Left cardiac atrium (tissue), 4 donors: ENCODE measurements at regions of chr9 and their contacts with region 1.

Region 1: DNA sequence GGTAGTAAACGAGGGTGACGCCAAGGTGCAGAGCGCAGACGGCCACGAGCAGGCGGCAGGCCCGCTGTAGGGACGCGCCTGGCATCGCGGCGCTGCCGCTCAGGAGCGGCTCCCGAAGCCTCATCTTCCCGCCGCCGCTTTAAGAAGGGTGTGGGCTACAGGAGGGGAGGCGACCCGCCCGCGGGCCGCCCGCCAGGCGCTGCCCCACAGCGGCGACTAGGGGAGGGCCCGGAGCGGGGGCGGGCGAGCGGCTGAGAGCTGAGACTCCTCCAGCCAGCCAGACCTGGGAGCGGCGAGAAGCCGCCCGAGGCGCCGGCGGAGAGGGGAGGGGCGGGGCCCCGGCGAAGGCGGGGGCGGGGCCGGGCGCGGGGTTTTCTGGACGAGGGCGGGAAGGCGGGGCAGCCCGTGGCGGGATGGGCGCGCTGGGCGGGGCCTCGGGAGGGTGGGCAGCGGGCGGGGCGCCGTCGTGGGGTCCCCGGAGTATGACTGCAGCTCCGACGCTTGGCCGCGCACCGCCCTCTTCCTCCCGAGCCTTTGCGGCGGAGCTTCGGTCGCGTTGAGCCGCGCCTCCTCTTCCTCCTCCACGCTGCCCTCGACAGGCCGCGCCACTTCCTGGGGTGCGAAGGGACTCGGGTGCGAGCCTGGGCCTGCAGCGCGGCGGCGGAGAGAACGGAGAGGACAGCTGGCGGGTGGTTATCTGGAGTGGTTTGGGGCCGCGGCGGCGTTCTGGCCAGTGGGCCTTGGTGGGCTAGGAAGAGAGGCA is at the start of gene B4GALT1:
- DNase-seq: peak; percentile 97
- ATAC-seq: peak; percentile 85 to 87
- total RNA-seq, gene B4GALT1: 49.5 to 107 TPM

Region 2: DNA sequence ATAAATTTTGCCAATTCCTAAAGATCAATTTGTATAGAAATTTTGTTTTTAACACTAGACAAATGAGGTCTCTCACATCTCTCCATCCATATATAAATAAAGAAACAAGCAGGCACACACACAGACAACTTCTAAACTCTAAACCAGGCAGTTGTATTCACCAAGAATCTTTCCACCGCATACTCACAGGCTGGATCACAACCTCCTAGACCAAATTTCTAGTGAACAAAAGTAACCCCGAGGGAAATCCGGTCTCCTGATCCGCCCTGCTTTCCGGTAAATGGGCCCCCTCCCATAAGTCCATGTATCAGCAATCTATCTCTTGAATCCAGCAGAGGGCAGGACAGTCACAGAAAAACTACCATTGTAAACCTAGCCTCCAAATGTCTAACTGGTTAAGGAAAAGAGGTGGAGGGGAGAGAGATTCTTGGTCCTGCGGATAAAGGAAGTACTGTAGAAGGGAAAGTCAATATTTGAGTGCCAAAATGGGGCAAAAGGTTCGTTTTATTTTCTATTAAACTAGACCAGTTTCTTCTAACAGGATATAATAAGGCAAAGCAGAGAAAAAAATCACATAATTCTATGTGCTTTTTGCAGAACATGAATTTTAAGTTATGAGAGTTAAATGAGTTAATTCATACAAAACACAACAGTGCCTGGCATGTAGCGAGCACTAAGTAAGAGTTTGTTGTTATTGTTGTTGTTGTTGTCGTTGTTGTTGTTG is 85.9 kb before region 1 on chr9:
- intact Hi-C with region 1: loop called (anchors 5 kb)
- DNase-seq: peak; percentile 67
- ATAC-seq: peak; percentile 56 to 67

Region 3: DNA sequence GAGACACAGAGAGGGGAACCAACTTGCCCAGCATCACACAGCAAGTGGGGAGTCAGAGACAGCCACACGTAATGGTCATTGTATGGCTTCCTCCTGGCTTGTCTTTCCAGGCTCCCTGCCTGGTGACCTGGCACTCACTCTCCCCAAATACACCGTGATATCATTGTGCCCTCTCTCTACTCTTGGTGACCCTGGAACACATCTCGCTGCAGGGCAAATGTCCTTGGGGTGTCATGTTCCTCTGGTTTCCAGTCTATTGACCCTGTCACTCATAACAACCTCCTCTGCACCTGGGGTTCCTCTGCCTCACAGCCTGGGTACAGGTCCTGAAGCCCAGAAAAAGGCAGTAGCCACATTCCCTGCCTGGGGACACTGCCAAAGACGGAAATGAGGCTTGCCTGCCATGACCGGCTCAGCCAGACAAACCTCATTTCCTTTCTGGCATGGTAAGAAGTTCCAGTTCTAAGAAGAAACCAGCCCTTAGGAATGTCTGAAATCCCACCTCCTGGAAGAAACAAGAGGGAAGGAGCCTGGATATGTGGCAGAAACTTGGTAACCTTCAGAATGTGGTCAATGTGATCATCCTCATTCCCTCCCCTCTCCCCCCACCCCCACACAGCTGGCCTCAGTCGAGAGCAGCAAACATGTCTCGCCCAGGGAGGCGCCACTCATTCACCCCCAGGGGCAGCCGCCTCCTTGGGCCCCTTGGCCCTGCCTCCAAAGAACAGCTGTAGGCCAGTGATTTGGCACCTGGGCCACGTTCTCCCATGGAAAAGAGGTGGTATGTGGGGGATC is 60.2 kb before region 1 on chr9:
- intact Hi-C with region 1: loop called in 1 of 2 experiments (anchors 10 kb)
- DNase-seq: peak; percentile 65
- ATAC-seq: peak; percentile 54 to 58

Region 4: DNA sequence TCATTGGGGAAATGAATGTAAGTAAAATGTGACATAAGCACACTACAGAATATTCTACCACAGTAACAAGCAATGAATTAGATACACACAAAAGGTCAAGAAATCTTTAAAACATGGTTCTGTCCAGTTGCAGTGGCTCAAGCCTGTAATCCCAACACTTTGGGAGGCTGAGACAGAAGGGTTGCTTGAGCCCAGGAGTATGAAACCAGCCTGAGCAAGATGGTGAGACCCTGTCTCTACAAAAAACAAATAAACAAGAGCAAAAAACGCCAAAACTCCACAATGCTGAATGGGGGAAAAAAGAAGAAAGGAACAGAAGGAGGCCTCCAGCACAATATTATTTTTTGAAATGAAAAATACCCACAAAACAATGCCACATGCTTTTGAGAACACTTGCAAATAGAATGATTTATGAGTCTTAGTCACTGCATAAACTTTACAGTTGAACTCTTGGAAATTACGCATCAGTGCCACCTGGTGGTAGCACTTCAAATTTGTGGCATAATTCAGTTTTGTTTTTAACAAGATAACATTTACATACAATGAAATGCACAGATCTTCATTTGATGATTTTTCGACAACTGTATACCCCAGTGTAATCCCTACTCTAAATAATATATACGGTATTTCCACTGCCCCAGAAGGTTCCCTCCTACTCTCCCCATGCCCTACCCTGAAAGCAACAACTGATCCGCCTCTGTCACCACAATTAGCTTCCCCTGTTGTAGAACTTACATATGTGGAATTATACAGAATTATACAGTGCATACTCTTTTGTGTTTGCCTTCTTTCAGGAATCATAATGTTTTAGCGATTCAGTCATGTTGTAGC is 58.3 kb after region 1 on chr9:
- intact Hi-C with region 1: loop called (anchors 5 to 10 kb)
- DNase-seq: peak; percentile 43
- ATAC-seq: peak; percentile 32 to 48